ENCODE measurements at regions of chr17 and their contacts with region 1.

Region 1: GRCh38 chr17:40803617-40804082 is 3.9 kb upstream of the KRT28 start:
- DNase-seq: peak; percentile 32 to 55
- ATAC-seq: peak in 1 of 2 donors; percentile 75
- H3K4me3 ChIP-seq: no peak overlapping the region
- H3K27ac ChIP-seq: no peak overlapping the region
- H3K4me1 ChIP-seq: no peaks in the 10 kb centered on the region
- H3K27me3 ChIP-seq: peaks cover 19 to 37% (median 28%) of the 10 kb centered on the region in 3 donors
- CTCF ChIP-seq: peak; percentile 48 to 79 (median 69)
- POLR2A ChIP-seq: no peak

Region 2: GRCh38 chr17:41648411-41649195 is 845.0 kb after region 1 on chr17:
- in situ Hi-C with region 1: loop called in 1 of 4 experiments (anchors 25 kb)
- intact Hi-C with region 1: loop called (anchors 1 kb)
- DNase-seq: peak; percentile 57 to 79
- ATAC-seq: peak; percentile 95 to 96
- H3K4me3 ChIP-seq: peak overlapping the region; percentile 43 to 52 (median 46)
- H3K27ac ChIP-seq: peak overlapping the region in 1 of 4 donors; percentile 30
- H3K4me1 ChIP-seq: peaks cover 7 to 16% of the 10 kb centered on the region in 2 donors
- H3K27me3 ChIP-seq: no peaks in the 10 kb centered on the region
- CTCF ChIP-seq: peak; percentile 82 to 95 (median 91)
- POLR2A ChIP-seq: no peak

Measured in gastrocnemius medialis (tissue), 4 donors.